ENCODE measurements at regions of chr22 and their contacts with region 1.

Region 1: DNA sequence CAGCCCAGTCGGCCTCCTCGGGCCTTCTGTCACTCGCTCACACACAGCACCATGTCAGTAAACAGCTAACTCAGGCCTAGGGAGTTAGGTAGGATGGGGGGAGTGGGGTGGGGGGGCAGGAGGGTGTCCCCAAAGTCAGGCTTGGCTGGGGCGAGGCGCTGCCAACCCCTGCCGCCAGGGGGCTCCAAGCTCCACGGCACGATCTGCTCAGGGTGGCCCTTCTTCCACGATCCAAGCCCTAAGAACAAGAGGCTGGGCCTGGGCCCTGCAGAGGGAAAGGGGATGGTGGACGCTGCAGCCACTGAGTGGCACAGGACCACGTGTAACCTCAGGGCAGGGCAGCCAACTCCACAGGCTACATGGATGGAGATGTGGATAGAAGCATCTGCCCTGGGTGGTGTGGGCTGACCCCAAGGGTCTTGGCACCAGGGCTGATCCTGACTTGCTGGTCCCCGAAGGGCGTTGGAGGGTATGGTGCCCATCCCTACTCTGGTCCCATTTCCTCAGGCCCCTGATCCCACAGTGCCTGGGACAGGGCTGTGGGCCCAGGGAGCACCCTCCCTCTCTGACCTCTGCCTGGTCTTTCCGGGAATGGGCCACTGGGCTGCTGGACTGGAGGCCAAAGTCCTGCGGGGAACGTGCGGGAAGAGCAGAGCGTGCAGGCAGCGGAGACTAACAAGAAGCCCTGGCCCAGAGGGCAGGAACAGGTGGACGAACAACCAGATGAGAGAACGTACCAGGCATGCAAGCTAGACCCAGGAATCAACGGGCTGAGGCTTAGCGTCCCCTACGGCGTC is 29.1 kb upstream of the TXNRD2 start:
- DNase-seq: peak; percentile 75
- H3K4me3 ChIP-seq: no peak overlapping the region
- H3K27ac ChIP-seq: peak overlapping the region; percentile 23
- H3K4me1 ChIP-seq: peaks cover 21% of the 10 kb centered on the region
- H3K27me3 ChIP-seq: no peaks in the 10 kb centered on the region
- CTCF ChIP-seq: peak; percentile 94

Region 2: GRCh38 chr22:20013382-20013871 is 42.8 kb after region 1 on chr22:
- CTCF ChIA-PET with region 1: interaction called, 7 read pairs
- POLR2A ChIA-PET with region 1: no interaction called
- intact Hi-C with region 1: loop called (anchors 1 kb)
- DNase-seq: peak; percentile 63
- H3K4me3 ChIP-seq: no peak overlapping the region
- H3K27ac ChIP-seq: no peak overlapping the region
- H3K4me1 ChIP-seq: no peaks in the 10 kb centered on the region
- H3K27me3 ChIP-seq: peaks cover 28% of the 10 kb centered on the region
- CTCF ChIP-seq: peak; percentile 84

Region 3: DNA sequence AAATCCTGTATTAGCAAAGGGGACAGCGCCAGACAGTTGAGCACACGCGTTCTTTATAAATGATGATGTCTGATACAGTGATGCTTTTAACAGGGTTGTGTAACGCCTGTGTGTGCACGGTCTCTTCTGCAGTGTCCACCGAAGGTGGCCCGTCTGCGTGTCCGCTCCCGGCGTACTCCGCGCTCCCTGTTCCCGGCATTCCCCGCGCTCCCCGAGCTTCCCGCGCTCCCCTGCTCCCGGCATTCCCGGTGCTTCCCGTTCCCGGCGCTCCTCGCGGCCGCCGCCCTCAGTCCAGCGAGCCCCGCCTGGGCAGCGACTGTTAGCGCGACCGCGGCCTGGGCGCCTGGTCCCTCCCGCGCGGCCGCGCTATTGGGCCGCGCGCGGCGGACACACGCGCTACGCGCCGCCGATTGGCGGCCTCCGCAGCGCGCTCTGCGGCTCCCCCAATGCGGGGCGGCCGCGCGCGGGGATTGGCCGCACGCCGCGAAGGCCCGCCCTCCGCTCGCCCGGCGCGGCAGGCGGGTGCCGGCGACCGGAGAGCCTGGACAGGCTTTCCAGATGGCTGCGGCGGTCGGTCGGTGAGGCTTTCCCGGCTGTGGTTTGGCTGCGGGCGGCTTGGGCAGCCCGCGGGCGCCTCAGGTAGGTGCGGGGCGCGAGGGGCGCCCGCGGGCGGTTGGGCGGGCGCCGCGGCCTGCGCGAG is 109.2 kb after region 1 on chr22 and contains the start of gene DGCR8:
- CTCF ChIA-PET with region 1: no interaction called
- POLR2A ChIA-PET with region 1: no interaction called
- intact Hi-C with region 1: loop called (anchors 10 kb)
- DNase-seq: peak; percentile 96
- H3K4me3 ChIP-seq: peak within 1 kb of the TSS; percentile 77
- H3K27ac ChIP-seq: peak within 1 kb of the TSS; percentile 89
- H3K4me1 ChIP-seq: no peaks in the 10 kb centered on the region
- H3K27me3 ChIP-seq: no peaks in the 10 kb centered on the region
- CTCF ChIP-seq: no peak
- total RNA-seq, gene DGCR8: 63.2 and 74.8 TPM in 2 replicates

Region 4: DNA sequence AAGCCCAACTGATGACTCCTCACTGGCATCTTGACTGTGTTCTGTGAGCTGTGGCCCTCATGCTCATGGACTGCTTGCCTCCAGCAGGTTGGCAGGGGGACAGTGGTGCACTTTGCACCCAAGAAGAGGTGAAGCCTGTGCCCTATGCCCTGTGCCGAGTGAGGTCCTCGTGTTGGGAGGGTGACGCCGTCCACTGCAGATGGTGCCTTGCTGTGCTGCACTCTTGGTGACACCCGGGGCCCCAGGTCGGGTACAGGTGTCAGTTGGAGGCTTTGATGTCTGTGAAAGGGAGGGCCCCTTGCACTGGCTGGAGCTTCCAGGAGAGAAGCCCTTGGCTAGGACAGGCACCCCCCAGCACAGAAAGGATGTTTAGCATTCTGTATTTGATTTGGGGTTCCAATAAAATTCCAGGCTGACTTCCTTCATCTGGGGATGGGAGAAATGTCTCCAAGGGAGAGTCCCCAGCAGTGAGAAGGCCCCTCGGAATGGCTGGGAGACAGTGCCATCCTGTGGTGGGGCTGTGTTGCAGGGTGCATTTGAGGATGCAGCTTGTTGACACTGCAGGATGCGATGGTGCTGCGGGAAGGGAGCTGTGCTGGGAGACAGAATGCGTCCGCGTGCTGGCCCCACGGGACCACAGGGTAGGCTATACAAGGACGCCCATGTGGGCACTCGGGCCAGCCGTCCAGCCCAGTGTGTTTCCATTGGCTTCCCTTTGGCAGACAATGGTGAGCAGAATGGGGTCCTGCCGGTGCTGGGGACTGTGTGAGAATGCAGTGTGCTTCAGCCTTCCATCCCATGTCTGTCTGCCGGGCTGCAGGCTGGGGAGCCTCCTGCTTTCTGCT is 158.4 kb after region 1 on chr22:
- CTCF ChIA-PET with region 1: no interaction called
- POLR2A ChIA-PET with region 1: no interaction called
- intact Hi-C with region 1: loop called (anchors 5 kb)
- DNase-seq: peak; percentile 68
- H3K4me3 ChIP-seq: no peak overlapping the region
- H3K27ac ChIP-seq: no peak overlapping the region
- H3K4me1 ChIP-seq: peaks cover 5% of the 10 kb centered on the region
- H3K27me3 ChIP-seq: no peaks in the 10 kb centered on the region
- CTCF ChIP-seq: peak; percentile 62

Region 5: GRCh38 chr22:20298803-20299735 is 328.4 kb after region 1 on chr22:
- CTCF ChIA-PET with region 1: no interaction called
- POLR2A ChIA-PET with region 1: no interaction called
- intact Hi-C with region 1: loop called (anchors 10 kb)
- DNase-seq: peak; percentile 94
- H3K4me3 ChIP-seq: peak overlapping the region; percentile 54
- H3K27ac ChIP-seq: no peak overlapping the region
- H3K4me1 ChIP-seq: no peaks in the 10 kb centered on the region
- H3K27me3 ChIP-seq: no peaks in the 10 kb centered on the region
- CTCF ChIP-seq: no peak

Measured in A673 (cell line).